B cell (primary cell): ENCODE measurements at regions of chr15 and their contacts with region 1.

Region 1: DNA sequence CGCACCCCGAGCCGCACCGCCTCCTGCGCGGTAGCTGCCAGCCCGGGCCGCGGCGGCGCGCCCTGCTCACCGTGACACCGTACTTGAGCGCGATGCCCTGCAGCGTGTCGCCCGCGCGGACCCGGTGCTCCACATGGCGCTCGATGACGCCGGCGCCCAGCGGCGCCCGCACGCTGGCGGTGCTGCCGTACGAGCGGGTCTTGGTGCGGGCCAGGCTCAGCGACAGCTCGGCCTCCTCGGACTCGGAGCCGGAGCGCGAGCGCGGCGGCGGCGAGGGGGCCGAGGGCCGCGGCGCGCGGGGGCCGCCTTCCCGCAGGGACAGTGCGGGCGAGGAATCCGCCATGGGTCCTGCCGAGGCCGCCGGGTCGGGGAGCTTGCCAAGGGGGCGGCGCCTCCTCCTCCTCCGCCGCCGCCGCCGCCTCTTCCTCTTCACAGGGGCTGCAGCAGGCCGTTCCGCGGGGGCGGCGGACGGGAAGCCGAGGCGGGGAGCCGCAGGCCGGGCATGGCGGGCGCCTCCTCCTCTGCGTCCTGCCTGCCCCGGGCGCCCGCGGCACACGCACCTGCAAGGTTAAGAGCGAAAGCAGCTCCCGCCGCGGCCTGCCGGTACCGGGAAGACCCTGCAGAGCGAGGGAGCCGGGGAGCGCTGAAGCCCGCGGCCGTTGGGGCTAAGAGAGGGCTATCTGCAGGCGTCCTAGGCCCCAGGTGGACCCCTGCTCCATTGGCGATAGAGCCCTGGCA is at the start of gene LYSMD2:
- DNase-seq: peak; percentile 82
- ATAC-seq: peak; percentile 67
- H3K4me3 ChIP-seq: peak within 1 kb of the TSS; percentile 68 to 93 (median 73)
- H3K4me3 Mint-ChIP-seq: peak within 1 kb of the TSS; percentile 98
- H3K27ac ChIP-seq: peak within 1 kb of the TSS; percentile 87 to 89
- H3K27ac Mint-ChIP-seq: peak within 1 kb of the TSS; percentile 95
- H3K4me1 ChIP-seq: peaks cover 49 to 53% of the 10 kb centered on the region in 2 donors
- H3K4me1 Mint-ChIP-seq: peaks cover 55% of the 10 kb centered on the region
- H3K27me3 ChIP-seq: no peaks in the 10 kb centered on the region
- H3K27me3 Mint-ChIP-seq: no peaks in the 10 kb centered on the region
- CTCF ChIP-seq: no peak
- total RNA-seq, gene LYSMD2: 48.2 and 49.4 TPM in 2 replicates

Region 2: DNA sequence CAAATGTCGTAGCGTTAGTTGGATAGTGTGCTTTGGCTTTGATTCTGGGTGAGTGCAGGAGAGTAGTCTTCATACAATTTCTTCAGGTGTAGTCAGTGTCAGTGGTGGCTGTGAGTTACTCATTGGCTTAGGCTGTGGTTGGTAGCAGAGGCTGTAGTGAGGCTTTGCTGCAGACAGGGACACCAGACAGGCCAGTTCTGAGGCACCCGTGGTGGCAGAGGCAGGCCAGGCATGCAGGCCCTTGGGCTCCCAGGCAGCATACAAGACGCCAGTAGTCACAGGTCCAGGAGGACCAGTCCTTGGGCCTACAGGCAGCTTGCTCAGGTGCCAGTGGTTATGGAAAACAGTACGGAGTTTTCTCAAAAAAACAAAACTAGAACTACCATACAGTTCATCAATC is 176.2 kb before region 1 on chr15:
- CTCF ChIA-PET with region 1: no interaction called
- POLR2A ChIA-PET with region 1: no interaction called
- intact Hi-C with region 1: no loop called
- DNase-seq: no peak
- ATAC-seq: no peak
- H3K4me3 ChIP-seq: no peak overlapping the region
- H3K4me3 Mint-ChIP-seq: no peak overlapping the region
- H3K27ac ChIP-seq: no peak overlapping the region
- H3K27ac Mint-ChIP-seq: no peak overlapping the region
- H3K4me1 ChIP-seq: no peaks in the 10 kb centered on the region
- H3K4me1 Mint-ChIP-seq: no peaks in the 10 kb centered on the region
- H3K27me3 ChIP-seq: no peaks in the 10 kb centered on the region
- H3K27me3 Mint-ChIP-seq: no peaks in the 10 kb centered on the region
- CTCF ChIP-seq: no peak

Region 3: GRCh38 chr15:51726351-51727073 is 10.9 kb before region 1 on chr15:
- CTCF ChIA-PET with region 1: interaction called, 26 read pairs
- POLR2A ChIA-PET with region 1: no interaction called
- intact Hi-C with region 1: loop called (anchors 1 kb)
- DNase-seq: peak; percentile 6
- ATAC-seq: peak; percentile 92
- H3K4me3 ChIP-seq: no peak overlapping the region
- H3K4me3 Mint-ChIP-seq: peak overlapping the region; percentile 32
- H3K27ac ChIP-seq: no peak overlapping the region
- H3K27ac Mint-ChIP-seq: peak overlapping the region; percentile 27
- H3K4me1 ChIP-seq: peaks cover 55 to 66% of the 10 kb centered on the region in 2 donors
- H3K4me1 Mint-ChIP-seq: peaks cover 75% of the 10 kb centered on the region
- H3K27me3 ChIP-seq: no peaks in the 10 kb centered on the region
- H3K27me3 Mint-ChIP-seq: no peaks in the 10 kb centered on the region
- CTCF ChIP-seq: no peak

Region 4: GRCh38 chr15:51750792-51751685 is 13.6 kb after region 1 on chr15 and contains the start of gene TMOD2:
- CTCF ChIA-PET with region 1: interaction called, 13 read pairs
- POLR2A ChIA-PET with region 1: interaction called, 16 read pairs
- intact Hi-C with region 1: loop called (anchors 1 kb)
- DNase-seq: peak; percentile 68
- ATAC-seq: peak; percentile 84
- H3K4me3 ChIP-seq: peak within 1 kb of the TSS; percentile 32 to 72 (median 63)
- H3K4me3 Mint-ChIP-seq: peak within 1 kb of the TSS; percentile 95
- H3K27ac ChIP-seq: peak within 1 kb of the TSS; percentile 18 to 31
- H3K27ac Mint-ChIP-seq: peak within 1 kb of the TSS; percentile 87
- H3K4me1 ChIP-seq: peaks cover 14 to 24% of the 10 kb centered on the region in 2 donors
- H3K4me1 Mint-ChIP-seq: peaks cover 43% of the 10 kb centered on the region
- H3K27me3 ChIP-seq: no peaks in the 10 kb centered on the region
- H3K27me3 Mint-ChIP-seq: no peaks in the 10 kb centered on the region
- CTCF ChIP-seq: no peak
- total RNA-seq, gene TMOD2: 25.9 and 30.3 TPM in 2 replicates

Region 5: GRCh38 chr15:51829360-51830275 is 92.2 kb after region 1 on chr15 and contains the start of gene TMOD3:
- CTCF ChIA-PET with region 1: no interaction called
- POLR2A ChIA-PET with region 1: no interaction called
- intact Hi-C with region 1: loop called (anchors 2 kb)
- DNase-seq: peak; percentile 93
- ATAC-seq: peak; percentile 92
- H3K4me3 ChIP-seq: peak within 1 kb of the TSS; percentile 72 to 88 (median 84)
- H3K4me3 Mint-ChIP-seq: peak within 1 kb of the TSS; percentile 98
- H3K27ac ChIP-seq: peak within 1 kb of the TSS; percentile 65 to 84
- H3K27ac Mint-ChIP-seq: peak within 1 kb of the TSS; percentile 91
- H3K4me1 ChIP-seq: peaks cover 18 to 21% of the 10 kb centered on the region in 2 donors
- H3K4me1 Mint-ChIP-seq: peaks cover 40% of the 10 kb centered on the region
- H3K27me3 ChIP-seq: no peaks in the 10 kb centered on the region
- H3K27me3 Mint-ChIP-seq: no peaks in the 10 kb centered on the region
- CTCF ChIP-seq: no peak
- total RNA-seq, gene TMOD3: 48.7 and 52.1 TPM in 2 replicates